Ascending aorta (tissue), 2 donors: ENCODE measurements at regions of chr1 and their contacts with region 1.

Region 1: DNA sequence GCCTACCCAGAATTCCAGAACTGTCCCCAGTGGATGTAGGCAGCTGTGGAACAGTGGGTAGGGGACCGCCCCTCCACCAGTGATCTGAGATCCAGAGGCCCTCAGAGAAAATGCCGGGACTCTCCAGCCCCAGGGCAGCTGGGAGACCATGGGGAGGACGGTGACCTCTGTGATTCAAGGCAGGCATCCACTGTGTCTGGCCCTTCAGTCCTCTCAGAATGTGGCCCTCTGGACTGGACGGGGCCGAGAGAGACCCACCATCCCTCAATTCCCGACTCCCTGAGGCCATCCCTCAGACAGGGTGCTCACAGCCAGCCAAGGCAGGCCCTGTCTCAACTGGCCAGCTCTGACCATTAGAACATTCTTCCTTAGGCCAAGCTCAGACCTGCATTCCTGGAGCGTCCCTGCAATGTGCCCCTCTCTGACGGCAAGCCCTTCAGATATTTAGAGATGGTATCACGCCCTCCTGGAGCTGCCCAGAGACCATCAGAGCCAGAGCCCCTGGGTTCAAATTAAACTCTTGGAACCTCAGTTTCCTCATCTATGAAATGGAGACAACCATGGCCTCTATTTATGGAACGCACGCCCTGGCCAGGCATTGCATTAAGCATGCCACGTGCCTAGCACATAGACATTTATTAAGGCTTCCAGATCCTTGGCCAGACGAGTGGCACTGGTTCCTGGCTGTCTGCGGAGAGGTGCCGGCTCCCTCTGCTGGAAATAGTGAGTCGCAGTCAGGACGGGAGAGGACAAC is 9.6 kb upstream of the EPS8L3 start:
- DNase-seq: peak; percentile 53 to 91
- H3K4me3 ChIP-seq: no peak overlapping the region
- H3K27ac ChIP-seq: no peak overlapping the region
- H3K4me1 ChIP-seq: peaks cover 0 to 4% of the 10 kb centered on the region in 2 donors
- H3K27me3 ChIP-seq: no peaks in the 10 kb centered on the region
- CTCF ChIP-seq: peak; percentile 87 to 89 (median 88)

Region 2: DNA sequence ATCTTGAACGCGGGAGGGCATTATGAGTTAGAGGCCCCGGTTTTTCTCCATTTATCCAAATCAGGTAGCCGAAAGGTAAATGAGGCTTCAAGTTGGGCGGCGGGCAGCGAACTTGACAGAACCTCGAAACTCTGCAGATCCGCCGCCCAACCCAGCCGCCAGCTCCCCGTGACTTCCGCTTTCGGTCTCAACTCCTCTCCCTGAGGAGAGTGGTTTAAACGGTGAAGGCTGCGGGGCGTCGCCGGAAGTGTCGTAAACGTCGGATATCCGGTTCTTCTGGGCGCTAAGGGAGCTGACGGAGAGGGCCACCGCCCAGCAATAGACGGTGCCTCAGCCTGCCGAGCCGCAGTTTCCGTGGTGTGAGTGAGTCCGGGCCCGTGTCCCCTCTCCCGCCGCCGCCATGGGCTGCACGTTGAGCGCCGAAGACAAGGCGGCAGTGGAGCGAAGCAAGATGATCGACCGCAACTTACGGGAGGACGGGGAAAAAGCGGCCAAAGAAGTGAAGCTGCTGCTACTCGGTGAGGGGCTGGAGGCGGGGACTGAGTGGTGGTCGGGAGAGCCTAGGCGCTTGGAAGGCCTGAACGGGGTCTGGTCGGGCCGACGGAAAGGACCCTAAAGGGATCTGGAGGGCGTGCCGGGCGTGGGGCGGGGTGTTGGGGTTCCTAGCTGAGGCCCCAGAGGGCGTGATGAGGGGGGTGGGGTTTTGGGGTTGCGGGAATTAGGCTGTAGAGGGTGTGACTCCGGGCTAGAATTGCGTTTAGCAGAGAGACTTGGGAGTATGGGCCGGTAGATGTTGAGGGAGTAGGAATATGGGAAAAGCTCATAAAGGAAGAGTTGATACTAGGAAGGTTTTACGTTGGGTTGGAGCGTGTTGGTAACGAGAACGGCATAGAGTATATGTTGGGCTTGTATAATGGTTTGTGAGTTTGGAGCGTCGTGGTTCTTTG is 224.7 kb before region 1 on chr1 and contains the start of gene GNAI3:
- intact Hi-C with region 1: loop called (anchors 1 kb)
- DNase-seq: peak; percentile 91 to 99
- H3K4me3 ChIP-seq: peak within 1 kb of the TSS; percentile 83 to 92
- H3K27ac ChIP-seq: peak within 1 kb of the TSS; percentile 94 to 95
- H3K4me1 ChIP-seq: peaks cover 0 to 23% of the 10 kb centered on the region in 2 donors
- H3K27me3 ChIP-seq: no peaks in the 10 kb centered on the region
- CTCF ChIP-seq: no peak
- total RNA-seq, gene GNAI3: 2.8 TPM

Region 3: DNA sequence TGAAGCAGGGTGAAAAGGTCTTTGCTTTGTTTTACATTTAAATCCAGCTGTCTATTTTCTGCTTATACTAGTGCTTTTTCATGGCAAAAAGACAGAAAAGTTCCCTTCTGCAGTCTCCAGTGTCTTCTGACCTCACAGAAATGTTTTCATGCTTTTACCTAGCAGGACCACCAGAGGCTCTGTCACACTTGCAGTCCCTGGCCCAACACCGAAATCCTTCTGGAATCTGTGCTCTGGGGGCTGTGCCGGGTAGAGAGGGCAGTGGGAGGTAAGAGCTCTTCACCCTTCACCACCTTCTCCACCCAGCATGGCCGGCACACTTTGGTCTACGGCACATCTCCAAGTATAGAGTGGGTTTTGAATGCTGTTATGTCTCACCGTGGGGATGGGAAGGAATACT is 174.7 kb before region 1 on chr1:
- intact Hi-C with region 1: no loop called
- DNase-seq: no peak
- H3K4me3 ChIP-seq: no peak overlapping the region
- H3K27ac ChIP-seq: no peak overlapping the region
- H3K4me1 ChIP-seq: no peaks in the 10 kb centered on the region
- H3K27me3 ChIP-seq: no peaks in the 10 kb centered on the region
- CTCF ChIP-seq: no peak

Region 4: DNA sequence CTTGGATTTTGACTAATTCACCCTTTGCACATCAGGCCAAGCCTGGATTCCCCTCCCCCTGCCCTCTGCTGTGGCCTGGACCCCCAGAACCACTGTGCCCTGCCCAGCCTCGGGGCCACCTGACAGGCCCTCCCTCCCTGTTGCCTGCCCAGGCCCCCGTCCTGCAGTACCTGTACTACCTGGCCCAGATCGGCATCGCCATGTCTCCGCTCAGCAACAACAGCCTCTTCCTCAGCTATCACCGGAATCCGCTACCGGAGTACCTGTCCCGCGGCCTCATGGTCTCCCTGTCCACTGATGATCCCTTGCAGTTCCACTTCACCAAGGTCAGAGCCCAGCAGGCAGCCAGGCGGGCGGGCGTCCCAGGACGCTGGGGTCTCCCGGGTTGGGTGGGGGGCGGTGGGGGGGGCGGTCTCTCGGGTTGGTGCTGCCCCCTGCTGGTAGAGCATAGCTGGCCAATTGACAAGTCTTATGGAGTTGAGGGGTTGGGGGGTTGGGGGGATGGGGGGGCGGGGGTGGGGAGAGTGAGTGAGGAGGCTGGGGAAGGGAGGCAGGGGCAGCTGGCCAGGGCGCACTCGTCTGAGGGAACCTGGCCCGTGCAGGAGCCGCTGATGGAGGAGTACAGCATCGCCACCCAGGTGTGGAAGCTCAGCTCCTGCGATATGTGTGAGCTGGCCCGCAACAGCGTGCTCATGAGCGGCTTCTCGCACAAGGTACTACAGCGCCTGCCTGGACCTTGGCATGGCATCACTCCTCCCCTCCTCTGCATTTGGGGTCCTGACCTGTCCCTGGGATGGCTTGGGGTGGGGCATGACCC is 143.0 kb before region 1 on chr1:
- intact Hi-C with region 1: no loop called
- DNase-seq: peak in 1 of 2 donors; percentile 58
- H3K4me3 ChIP-seq: no peak overlapping the region
- H3K27ac ChIP-seq: no peak overlapping the region
- H3K4me1 ChIP-seq: no peaks in the 10 kb centered on the region
- H3K27me3 ChIP-seq: no peaks in the 10 kb centered on the region
- CTCF ChIP-seq: peak in 2 of 3 experiments; percentile 29 to 58

Region 5: DNA sequence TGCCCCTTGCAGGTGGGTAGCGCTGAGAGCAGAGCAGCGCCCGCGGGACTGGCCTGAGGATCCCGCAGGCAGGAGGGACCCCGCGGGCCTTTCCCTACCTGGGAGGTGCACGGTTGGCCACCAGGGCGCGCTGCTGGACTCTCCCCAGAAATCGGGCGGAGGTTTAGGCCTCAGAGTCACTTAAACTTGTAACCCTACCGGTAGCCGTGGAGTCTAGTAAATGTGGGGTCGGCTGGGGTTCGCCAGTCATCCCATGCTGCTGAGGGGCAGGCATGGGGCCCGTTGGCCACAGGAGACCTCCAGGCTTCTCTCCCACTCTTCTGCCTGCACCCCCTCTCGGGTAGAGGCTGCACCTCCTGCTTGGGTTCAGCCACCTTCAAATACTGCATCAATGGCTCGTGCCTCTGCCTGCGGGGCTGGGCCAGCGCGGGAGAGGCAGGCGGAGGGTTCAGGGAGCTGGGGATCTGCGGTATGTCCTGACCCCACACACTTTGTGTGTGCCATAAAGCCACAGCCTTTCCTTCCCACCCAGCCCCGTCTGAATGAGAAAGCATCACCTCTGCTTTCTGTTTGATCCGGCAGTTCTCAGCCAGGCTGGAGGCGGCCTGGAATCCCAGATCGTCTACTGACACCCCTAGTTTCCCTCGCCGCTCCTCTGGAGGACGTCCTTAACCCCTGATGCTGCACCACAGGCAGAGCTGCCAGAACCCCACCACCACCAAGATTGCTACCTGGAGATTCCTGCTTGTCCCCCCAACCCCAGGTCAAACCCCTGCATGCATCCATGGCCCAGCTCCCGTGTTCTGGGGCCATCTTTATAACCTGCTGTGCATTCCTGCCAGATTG is 129.7 kb before region 1 on chr1:
- intact Hi-C with region 1: loop called (anchors 5 kb)
- DNase-seq: peak in 1 of 2 donors; percentile 90
- H3K4me3 ChIP-seq: no peak overlapping the region
- H3K27ac ChIP-seq: no peak overlapping the region
- H3K4me1 ChIP-seq: no peaks in the 10 kb centered on the region
- H3K27me3 ChIP-seq: no peaks in the 10 kb centered on the region
- CTCF ChIP-seq: peak; percentile 81 to 87 (median 81)

Region 6: GRCh38 chr1:109739738-109740660 is 33.3 kb before region 1 on chr1:
- intact Hi-C with region 1: loop called (anchors 5 kb)
- DNase-seq: peak; percentile 51 to 89
- H3K4me3 ChIP-seq: peak overlapping the region; percentile 58 to 93
- H3K27ac ChIP-seq: peak overlapping the region; percentile 71 to 86
- H3K4me1 ChIP-seq: peaks cover 0 to 5% of the 10 kb centered on the region in 2 donors
- H3K27me3 ChIP-seq: no peaks in the 10 kb centered on the region
- CTCF ChIP-seq: no peak

Region 7: DNA sequence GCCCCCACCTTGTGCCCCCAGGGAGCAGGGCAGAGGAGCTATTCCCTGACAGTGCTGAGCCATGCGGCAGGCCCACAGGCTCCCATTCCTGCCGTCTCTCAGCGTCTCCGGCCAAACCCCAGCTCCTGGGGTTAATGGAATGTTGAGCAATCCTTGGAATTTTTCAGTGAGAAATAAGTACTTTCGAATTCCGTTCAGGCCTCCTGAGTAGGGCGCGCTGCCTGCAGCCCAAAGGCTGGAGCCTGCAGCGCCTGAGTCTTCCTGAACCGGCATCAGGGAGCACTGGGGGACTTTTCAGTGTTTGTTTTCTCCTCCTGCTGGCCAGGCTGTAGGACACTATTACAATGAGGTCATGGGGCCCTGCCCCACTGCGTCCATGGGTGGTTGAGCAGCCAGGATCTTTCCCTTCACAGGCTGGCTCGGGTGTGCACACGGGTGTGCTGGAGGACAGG is 104.0 kb after region 1 on chr1:
- intact Hi-C with region 1: loop called (anchors 2 kb)
- DNase-seq: peak in 1 of 2 donors; percentile 89
- H3K4me3 ChIP-seq: peak overlapping the region in 1 of 2 donors; percentile 42
- H3K27ac ChIP-seq: peak overlapping the region; percentile 93 to 94
- H3K4me1 ChIP-seq: peaks cover 11 to 37% of the 10 kb centered on the region in 2 donors
- H3K27me3 ChIP-seq: no peaks in the 10 kb centered on the region
- CTCF ChIP-seq: peak; percentile 30 to 46 (median 37)

Region 8: DNA sequence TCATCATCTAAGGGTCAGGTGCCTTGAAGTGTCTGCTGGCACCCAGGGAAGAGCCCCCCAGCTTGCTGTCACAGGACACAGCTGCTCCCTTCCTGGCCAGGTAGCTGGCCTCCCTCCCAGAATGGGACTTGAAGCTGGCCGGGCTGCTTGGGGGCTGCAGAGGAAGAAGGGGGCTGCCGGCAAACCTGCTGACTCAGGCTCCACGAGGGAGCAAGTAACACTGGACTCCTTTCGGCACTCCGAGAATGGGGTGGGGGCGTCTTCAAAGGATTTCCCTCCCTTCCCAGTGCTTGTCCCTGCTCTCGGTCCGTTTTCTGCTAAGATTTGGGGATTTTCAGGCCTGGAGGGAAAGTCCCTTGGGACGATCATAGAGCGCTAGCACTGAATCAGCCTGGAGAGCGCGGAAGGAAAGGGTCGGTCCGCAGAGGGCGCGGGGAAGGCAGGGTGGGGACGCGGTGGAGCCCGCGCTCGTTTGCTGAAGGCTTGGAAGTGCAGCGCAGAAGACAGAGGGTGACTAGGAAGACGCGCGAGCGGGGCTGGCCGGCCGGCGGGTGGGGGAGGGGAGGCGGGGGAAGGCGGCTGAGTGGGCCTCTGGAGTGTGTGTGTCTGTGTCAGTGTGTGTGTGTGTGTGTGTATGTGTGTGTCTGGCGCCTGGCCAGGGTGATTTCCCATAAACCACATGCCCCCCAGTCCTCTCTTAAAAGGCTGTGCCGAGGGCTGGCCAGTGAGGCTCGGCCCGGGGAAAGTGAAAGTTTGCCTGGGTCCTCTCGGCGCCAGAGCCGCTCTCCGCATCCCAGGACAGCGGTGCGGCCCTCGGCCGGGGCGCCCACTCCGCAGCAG is 137.0 kb after region 1 on chr1 and contains the start of gene CSF1:
- intact Hi-C with region 1: loop called (anchors 2 kb)
- DNase-seq: peak; percentile 55 to 88
- H3K4me3 ChIP-seq: peak within 1 kb of the TSS; percentile 64 to 82
- H3K27ac ChIP-seq: peak within 1 kb of the TSS; percentile 77 to 84
- H3K4me1 ChIP-seq: peaks cover 5 to 40% of the 10 kb centered on the region in 2 donors
- H3K27me3 ChIP-seq: no peaks in the 10 kb centered on the region
- CTCF ChIP-seq: no peak
- total RNA-seq, gene CSF1: 140 TPM

Region 9: DNA sequence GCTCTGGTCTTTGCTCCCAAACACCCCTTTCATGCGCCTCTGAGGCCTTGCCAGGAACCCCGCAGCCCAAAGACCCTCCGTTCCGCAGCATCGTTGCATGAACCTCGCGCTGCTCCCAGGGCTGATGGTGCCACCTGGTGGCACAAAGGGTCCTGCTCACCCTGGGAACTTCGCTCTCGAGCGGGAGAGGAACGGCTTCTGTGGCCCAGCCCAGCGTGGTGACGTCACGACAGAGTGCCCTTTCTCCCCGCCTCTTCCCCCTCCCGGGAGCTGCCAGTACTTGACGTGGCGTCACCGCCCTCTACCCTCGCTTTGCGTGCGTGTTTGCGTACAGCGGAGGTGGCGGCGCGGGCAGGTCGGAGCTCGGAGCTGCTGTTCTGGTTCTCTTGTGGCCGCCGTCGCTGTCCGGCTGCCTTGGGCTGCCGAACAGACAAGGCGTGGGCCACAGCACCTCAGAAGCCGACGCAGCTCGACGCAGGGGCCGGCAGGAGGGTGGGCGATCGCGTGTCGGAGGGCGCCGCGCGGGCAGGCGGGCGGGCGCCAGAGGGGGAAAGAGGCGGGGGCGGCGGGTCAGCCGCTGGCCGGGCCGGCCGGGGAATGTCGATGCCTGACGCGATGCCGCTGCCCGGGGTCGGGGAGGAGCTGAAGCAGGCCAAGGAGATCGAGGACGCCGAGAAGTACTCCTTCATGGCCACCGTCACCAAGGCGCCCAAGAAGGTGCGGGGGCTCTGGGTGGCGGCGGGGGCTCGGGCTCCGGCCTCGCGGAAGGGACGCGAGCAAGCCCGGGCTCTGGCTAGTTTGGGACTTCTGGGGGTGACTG is 211.3 kb after region 1 on chr1 and contains the start of gene AHCYL1:
- intact Hi-C with region 1: loop called (anchors 1 kb)
- DNase-seq: peak; percentile 95 to 100
- H3K4me3 ChIP-seq: peak within 1 kb of the TSS; percentile 77 to 81
- H3K27ac ChIP-seq: peak within 1 kb of the TSS; percentile 97 to 98
- H3K4me1 ChIP-seq: peaks cover 10 to 12% of the 10 kb centered on the region in 2 donors
- H3K27me3 ChIP-seq: no peaks in the 10 kb centered on the region
- CTCF ChIP-seq: peak; percentile 98 to 99 (median 98)
- total RNA-seq, gene AHCYL1: 49.1 TPM